ENCODE measurements at regions of chr5 and their contacts with region 1.

Region 1: GRCh38 chr5:118808441-118808840 is 179.9 kb downstream of the DTWD2 start:
- DNase-seq: no peak
- H3K4me3 ChIP-seq: no peak overlapping the region
- H3K27me3 ChIP-seq: no peaks in the 10 kb centered on the region
- CTCF ChIP-seq: no peak

Region 2: GRCh38 chr5:118791926-118792734 is 16.3 kb before region 1 on chr5:
- CTCF ChIA-PET with region 1: interaction called, 10 read pairs
- POLR2A ChIA-PET with region 1: no interaction called
- DNase-seq: peak; percentile 24
- H3K4me3 ChIP-seq: no peak overlapping the region; the same call in 1 of the 2 replicates
- H3K27me3 ChIP-seq: no peaks in the 10 kb centered on the region
- CTCF ChIP-seq: peak; percentile 82

Region 3: DNA sequence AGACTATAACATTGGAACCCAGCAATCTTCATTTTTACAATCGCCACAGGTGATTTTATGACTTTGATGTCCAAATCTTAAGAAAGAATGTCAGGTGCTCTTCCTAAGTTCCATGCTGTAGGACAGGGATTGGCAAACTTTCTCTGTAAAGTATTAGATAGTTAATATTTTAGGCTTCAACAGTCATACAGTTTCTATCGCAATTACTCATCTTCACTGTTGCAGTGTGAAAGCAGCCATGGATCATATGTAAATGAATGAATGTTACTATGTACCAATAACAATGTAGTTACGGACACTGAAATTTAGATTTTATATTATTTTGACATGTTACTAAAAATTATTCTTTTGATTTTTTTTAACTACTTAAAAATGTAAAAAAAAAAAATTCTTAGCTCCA is 10.2 kb after region 1 on chr5:
- CTCF ChIA-PET with region 1: no interaction called
- POLR2A ChIA-PET with region 1: no interaction called
- DNase-seq: no peak
- H3K4me3 ChIP-seq: no peak overlapping the region
- H3K27me3 ChIP-seq: no peaks in the 10 kb centered on the region
- CTCF ChIP-seq: no peak

Measured in BJ (cell line).